Activated CD4-positive, alpha-beta T cell treated with anti-CD3 and anti-CD28 coated beads, Interleukin-2, amount 10 ng/mL, durations not matched to agents 24 days and 14 days (primary cell): ENCODE measurements at regions of chr6 and their contacts with region 1.

Region 1: DNA sequence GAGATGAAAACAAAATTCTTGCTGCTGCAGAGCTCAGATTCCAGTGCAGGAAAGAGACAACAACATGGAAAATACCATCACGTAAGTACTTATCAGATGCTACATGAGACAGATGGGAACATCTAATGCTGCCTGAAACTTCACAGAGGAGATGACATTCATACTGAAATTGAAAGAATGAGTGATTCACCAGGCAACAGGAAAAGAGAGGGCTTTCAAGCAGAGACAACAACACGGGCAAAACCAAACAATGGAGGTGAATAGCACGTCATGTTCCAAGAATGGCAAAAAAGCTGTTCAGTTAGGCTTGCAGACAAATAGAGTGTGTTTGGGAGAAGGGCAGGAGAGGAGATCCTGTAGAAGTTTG is 39.3 kb downstream of the GTF2H5 start:
- DNase-seq: peak; percentile 90
- H3K4me3 Mint-ChIP-seq: peak overlapping the region; percentile 70
- H3K27ac Mint-ChIP-seq: peak overlapping the region; percentile 90
- H3K4me1 Mint-ChIP-seq: peaks cover 45% of the 10 kb centered on the region
- H3K27me3 Mint-ChIP-seq: no peaks in the 10 kb centered on the region

Region 2: DNA sequence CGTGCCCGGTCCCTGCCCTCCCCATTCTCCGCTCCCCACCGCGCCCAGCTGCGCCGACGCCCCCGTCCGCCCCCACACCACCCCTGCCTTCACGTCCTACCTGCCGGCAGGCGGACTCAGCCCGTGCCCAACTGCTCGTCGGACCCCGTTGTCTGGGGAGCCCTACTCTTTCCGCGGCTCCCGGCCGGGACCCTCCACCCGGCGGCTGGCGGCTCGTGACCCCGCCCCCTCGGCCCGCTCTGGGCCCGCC is 39.4 kb before region 1 on chr6 and contains the start of gene SERAC1:
- intact Hi-C with region 1: loop called (anchors 1 kb)
- DNase-seq: no peak
- H3K4me3 Mint-ChIP-seq: peak within 1 kb of the TSS; percentile 94
- H3K27ac Mint-ChIP-seq: peak within 1 kb of the TSS; percentile 96
- H3K4me1 Mint-ChIP-seq: peaks cover 21% of the 10 kb centered on the region
- H3K27me3 Mint-ChIP-seq: peaks cover 2% of the 10 kb centered on the region
- total RNA-seq, gene SERAC1: 4.6 and 5.4 TPM in 2 replicates

Region 3: DNA sequence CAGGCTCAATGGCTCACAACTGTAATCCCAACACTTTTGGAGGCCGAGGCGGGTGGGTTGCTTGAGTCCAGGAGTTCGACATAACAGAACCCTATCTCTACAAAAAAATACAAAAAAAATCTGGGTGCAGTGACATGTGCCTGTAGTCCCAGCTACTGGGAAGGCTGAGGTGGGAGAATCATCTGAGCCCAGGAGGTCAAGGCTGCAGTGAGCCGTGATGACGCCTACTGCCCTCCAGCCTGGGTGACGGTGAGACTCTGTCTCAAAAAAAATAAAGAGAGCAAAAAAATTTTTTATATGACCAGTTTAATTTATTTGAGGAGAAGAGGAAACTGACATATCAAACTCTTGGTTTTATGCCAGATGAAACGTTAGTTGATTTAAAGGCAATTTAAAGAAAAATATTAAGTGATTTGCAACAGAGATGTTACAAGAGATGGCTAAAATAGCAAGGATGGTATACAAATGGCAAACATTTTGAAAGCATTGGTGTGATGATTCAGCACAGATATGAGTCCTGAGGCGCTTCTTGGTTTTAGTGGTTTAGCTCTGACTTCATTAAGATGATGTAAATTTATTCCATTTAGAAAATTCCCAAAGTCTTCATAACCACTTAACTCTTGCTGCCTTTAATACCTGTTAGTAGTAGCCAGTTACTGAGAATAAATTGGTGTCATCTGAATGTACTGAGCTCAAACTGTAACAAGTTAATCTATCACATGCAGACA is 21.5 kb before region 1 on chr6:
- intact Hi-C with region 1: loop called (anchors 1 kb)
- DNase-seq: no peak
- H3K4me3 Mint-ChIP-seq: no peak overlapping the region
- H3K27ac Mint-ChIP-seq: peak overlapping the region; percentile 50
- H3K4me1 Mint-ChIP-seq: peaks cover 29% of the 10 kb centered on the region
- H3K27me3 Mint-ChIP-seq: no peaks in the 10 kb centered on the region